HCT116 (cell line): ENCODE measurements at regions of chr21 and their contacts with region 1.

Region 1: DNA sequence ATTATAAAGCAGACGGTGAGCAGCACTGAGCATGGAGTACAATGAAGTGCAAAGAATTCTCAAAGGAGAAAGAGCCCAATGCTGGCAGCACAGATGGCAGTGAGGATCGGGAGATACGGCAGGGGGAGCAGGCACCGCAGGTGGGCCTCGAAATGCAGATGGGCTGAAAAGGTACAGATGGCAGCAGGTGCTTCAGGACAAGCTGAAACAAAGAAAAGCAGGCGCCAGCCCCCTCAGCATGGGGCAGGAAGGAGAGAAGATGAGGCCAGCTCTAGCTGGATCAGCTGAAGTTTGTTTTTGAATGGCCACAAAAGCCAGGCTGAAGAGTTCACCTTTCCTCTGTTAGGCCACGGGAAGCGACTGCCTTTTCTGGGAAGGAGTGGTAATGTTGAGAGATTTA is 7.7 kb downstream of the CFAP298 start:
- DNase-seq: no peak
- ATAC-seq: no peak
- H3K4me3 ChIP-seq: no peak overlapping the region
- H3K27ac ChIP-seq: no peak overlapping the region
- H3K4me1 ChIP-seq: no peaks in the 10 kb centered on the region
- H3K27me3 ChIP-seq: no peaks in the 10 kb centered on the region
- CTCF ChIP-seq: no peak
- POLR2A ChIP-seq: no peak
- RAD21 ChIP-seq: no peak

Region 2: GRCh38 chr21:31866077-31866511 is 738.4 kb before region 1 on chr21:
- CTCF ChIA-PET with region 1: interaction called, 9 read pairs
- POLR2A ChIA-PET with region 1: no interaction called
- RAD21 ChIA-PET with region 1: no interaction called
- intact Hi-C with region 1: loop called (anchors 5 kb)
- DNase-seq: peak; percentile 79
- ATAC-seq: peak; percentile 99
- H3K4me3 ChIP-seq: no peak overlapping the region
- H3K27ac ChIP-seq: no peak overlapping the region
- H3K4me1 ChIP-seq: no peaks in the 10 kb centered on the region
- H3K27me3 ChIP-seq: peaks cover 19% of the 10 kb centered on the region
- CTCF ChIP-seq: peak; percentile 76 to 92 (median 91); a peak in 5 of 6 replicates
- POLR2A ChIP-seq: no peak
- RAD21 ChIP-seq: peak; percentile 64

Region 3: GRCh38 chr21:32340863-32341848 is 263.3 kb before region 1 on chr21:
- CTCF ChIA-PET with region 1: interaction called, 11 read pairs
- POLR2A ChIA-PET with region 1: no interaction called
- RAD21 ChIA-PET with region 1: no interaction called
- intact Hi-C with region 1: no loop called
- DNase-seq: no peak
- ATAC-seq: no peak
- H3K4me3 ChIP-seq: no peak overlapping the region
- H3K27ac ChIP-seq: peak overlapping the region; percentile 54; the same call in 1 of the 2 replicates
- H3K4me1 ChIP-seq: peaks cover 13 to 16% of the 10 kb centered on the region in 2 experiments
- H3K27me3 ChIP-seq: no peaks in the 10 kb centered on the region
- CTCF ChIP-seq: no peak
- POLR2A ChIP-seq: no peak
- RAD21 ChIP-seq: no peak